Right ventricle myocardium inferior (tissue), 1 donor: ENCODE measurements at regions of chr6 and their contacts with region 1.

Region 1: GRCh38 chr6:13614926-13615798 is at the start of gene NOL7:
- DNase-seq: peak; percentile 96
- ATAC-seq: peak; percentile 99
- total RNA-seq, gene NOL7: 50.7 TPM

Region 2: DNA sequence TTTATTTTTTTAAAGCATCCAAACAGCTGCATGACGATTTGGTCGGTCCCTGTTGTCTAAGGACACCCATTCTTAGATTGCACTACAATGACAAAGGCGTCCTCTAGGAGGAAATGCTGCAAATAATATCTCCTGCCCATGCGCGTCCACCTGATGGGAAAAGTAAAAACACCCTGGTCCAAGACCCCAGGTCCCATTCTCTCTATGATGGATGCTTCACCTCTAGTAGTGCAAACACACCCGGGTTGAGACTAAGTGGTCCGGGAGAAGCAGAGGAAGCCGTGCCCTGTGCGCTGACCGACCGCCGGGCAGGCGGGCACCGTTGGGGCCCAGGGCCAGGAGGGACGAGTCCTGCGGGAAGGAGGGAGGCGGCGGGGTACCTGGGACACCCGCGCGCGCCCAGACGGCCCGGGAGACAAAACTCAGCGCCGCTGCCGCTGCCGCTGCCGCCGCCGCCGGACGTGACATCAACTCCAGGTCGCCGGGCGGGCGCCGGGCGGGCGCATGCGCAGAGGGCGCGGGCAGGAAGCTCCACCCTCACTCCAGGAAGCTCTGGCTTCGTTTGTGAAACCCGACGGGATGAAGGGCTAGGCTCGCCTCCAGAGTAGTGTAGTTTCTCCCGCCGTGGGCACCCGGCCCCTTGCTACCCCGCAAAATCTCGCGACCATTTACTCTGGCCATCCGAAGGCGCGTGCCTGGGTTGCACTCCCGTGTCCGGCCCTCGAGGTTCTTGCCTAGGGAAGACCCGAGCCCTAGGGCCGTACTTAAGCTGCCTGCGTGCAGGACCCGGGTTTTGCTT is 286.9 kb before region 1 on chr6 and contains the start of gene TBC1D7:
- intact Hi-C with region 1: loop called (anchors 5 kb)
- DNase-seq: peak; percentile 94
- ATAC-seq: peak; percentile 96
- total RNA-seq, gene TBC1D7: 32.2 TPM

Region 3: DNA sequence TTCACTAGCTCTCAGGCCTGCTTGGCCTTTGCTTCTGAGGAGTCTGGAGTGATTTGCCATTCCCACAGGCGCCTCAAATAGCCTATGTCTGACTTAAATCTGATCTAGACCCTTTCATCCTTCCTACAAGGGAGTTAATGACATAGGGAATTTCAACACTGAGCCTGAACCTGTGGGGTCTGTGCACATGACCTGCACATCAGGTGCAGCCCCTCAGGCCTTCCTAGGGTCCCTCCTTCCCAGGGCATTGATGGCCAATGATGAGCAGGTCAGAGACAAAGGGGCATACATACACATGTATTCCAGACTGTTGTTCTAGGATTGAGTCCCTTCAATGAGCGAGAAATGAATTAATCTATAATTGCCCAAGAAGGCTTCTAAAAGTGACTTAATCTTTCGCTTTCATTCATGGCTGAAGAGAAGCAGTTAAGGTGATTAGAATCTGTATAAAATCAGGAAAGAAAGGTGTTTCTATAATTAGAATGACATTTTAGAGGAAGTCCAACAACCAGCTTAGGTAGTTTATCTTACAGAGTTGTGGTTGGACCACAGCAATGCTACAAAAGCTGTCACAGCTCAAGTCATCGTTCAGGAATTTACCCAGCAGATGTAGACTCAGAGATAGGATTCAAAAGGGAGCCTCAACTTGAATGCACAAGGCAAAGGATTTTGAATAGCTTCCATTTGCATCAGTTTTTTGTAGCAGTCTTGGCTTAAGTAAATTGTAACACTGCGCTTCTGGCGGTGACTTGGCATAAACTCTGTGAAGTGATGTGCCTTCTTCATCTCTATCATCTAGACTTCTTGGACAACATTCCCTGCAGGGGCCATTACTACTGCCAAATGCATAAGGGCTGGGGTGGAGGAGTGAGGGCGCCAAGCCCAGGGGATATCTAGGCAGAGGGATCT is 259.9 kb before region 1 on chr6:
- intact Hi-C with region 1: no loop called
- DNase-seq: no peak
- ATAC-seq: peak; percentile 36

Region 4: DNA sequence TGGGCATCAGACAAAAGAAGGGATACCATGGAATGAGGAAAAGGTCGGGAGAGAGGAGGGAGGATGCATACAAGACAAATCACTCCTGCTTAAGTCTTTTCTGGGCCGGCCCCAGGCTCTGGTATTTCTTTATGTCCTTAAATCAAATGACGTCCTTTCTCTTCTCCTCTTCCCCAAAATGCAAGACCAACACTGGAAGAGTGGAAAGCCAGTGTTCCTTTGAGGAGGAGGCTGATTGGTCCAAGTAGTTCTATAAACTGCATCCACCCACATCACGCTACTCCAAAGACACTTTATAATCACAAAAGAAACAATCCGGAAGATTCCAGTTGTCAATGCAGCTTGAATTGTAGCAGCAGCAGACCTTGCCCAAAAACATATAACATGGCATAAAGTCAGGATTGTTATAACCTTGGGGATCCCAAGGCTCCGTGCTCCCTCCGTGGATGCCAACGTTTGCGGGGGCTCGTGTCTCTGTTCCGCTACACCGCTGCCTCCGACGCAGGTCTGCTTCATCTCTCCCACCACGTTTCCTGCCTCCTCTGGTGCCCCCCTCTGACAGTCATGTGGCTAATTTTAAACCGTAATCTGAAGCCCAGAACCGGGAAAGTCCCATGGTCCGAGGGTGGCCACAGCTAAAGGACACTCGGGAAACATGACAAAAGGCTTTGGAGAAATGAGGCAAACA is 152.1 kb after region 1 on chr6:
- intact Hi-C with region 1: loop called (anchors 5 kb)
- DNase-seq: no peak
- ATAC-seq: peak; percentile 80